GM10248 (cell line): ENCODE measurements at regions of chr11 and their contacts with region 1.

Region 1: DNA sequence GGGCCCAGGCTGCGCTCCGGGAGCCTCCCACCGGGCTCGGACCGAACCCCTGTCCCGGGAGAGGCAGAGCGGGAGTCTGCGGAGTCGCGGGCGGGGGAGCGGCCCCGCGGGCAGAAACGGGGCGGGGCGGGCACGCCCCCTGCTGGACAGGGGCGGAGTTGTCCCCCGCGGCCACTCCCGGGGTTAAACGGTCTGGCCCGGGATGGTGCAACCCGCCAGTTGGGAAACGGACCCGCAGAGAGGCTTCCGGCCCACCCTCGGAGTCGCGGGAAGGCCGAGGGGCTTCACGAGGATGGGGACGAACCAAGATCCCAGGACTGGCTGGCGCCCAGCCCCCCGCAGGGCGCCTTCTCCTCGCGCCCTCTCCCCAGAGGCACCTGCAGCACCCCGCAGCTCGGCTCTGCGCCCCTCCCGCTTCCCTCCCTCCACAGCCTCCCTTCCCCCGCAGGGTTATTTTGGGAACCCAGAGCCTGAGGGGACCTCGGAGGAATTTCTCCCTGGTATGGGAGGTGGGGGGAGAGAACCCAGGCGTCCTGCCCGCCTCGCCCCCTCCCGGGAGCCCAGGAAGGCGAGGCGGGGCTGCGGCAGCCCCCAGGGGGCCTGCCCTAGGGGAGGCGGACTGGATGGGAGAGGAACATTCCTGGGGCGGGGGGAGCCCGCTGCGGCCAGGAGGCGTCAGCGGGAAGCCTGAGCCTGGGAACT is 902 bp downstream of the RASGRP2 start:
- DNase-seq: peak; percentile 92
- CTCF ChIP-seq: peak; percentile 74

Region 2: GRCh38 chr11:64729851-64730382 is 13.1 kb before region 1 on chr11:
- CTCF ChIA-PET with region 1: interaction called, 16 read pairs
- POLR2A ChIA-PET with region 1: no interaction called
- DNase-seq: no peak
- CTCF ChIP-seq: no peak